ENCODE measurements at regions of chr3 and their contacts with region 1.

Region 1: GRCh38 chr3:64518950-64519349 is 168.8 kb downstream of the ADAMTS9 start:
- DNase-seq: peak; percentile 13
- H3K4me3 ChIP-seq: no peak overlapping the region
- H3K27ac ChIP-seq: no peak overlapping the region
- H3K27me3 ChIP-seq: no peaks in the 10 kb centered on the region
- CTCF ChIP-seq: no peak

Region 2: GRCh38 chr3:64501298-64501906 is 17.5 kb before region 1 on chr3:
- CTCF ChIA-PET with region 1: interaction called, 4 read pairs
- POLR2A ChIA-PET with region 1: interaction called, 23 read pairs
- DNase-seq: peak; percentile 96
- H3K4me3 ChIP-seq: no peak overlapping the region
- H3K27ac ChIP-seq: peak overlapping the region; percentile 96
- H3K27me3 ChIP-seq: no peaks in the 10 kb centered on the region
- CTCF ChIP-seq: no peak

Region 3: DNA sequence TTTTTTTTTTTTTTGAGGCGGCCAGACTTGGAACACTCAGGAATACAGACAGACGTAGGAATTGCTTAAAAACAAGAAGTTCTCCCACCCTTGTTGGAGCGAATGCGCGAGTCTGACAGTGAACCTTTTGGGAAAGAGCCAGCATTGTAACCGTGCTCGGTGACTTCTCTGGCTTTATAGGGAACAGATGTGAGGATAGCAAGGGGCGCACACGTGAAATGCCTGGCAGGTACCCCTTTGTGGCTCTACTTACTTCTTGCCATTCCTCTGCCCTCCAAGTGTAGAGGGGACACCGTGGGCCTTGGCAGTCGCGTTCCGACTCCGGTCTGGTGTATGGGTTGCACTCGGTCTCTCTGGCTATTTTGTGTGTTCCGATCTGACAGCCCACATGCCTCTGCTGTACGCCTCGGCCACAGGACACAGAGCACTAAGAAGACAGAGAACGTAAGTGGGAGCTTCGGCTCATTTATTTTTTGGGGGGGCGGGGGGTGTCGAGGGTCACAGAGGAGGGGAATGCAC is 42.4 kb after region 1 on chr3:
- CTCF ChIA-PET with region 1: no interaction called
- POLR2A ChIA-PET with region 1: no interaction called
- DNase-seq: no peak
- H3K4me3 ChIP-seq: no peak overlapping the region
- H3K27ac ChIP-seq: no peak overlapping the region
- H3K27me3 ChIP-seq: peaks cover 26% of the 10 kb centered on the region
- CTCF ChIP-seq: no peak

Measured in AG04450 (cell line).